Activated CD4-positive, alpha-beta T cell treated with anti-CD3 and anti-CD28 coated beads, Interleukin-2, amount 10 ng/mL, durations not matched to agents 24 days and 14 days (primary cell): ENCODE measurements at regions of chr7 and their contacts with region 1.

Region 1: GRCh38 chr7:100126931-100127865 is at the start of gene MBLAC1:
- DNase-seq: peak; percentile 97
- H3K4me3 Mint-ChIP-seq: peak within 1 kb of the TSS; percentile 99
- H3K27ac Mint-ChIP-seq: peak within 1 kb of the TSS; percentile 100
- H3K4me1 Mint-ChIP-seq: peaks cover 22% of the 10 kb centered on the region
- H3K27me3 Mint-ChIP-seq: no peaks in the 10 kb centered on the region
- total RNA-seq, gene MBLAC1: 3.0 and 3.5 TPM in 2 replicates

Region 2: GRCh38 chr7:99997545-99998137 is 129.6 kb before region 1 on chr7:
- intact Hi-C with region 1: loop called (anchors 1 kb)
- DNase-seq: peak; percentile 92
- H3K4me3 Mint-ChIP-seq: peak overlapping the region; percentile 81
- H3K27ac Mint-ChIP-seq: peak overlapping the region; percentile 89
- H3K4me1 Mint-ChIP-seq: peaks cover 12% of the 10 kb centered on the region
- H3K27me3 Mint-ChIP-seq: peaks cover 2% of the 10 kb centered on the region

Region 3: GRCh38 chr7:100088621-100089457 is 38.4 kb before region 1 on chr7 and contains the start of gene COPS6:
- intact Hi-C with region 1: loop called (anchors 2 kb)
- DNase-seq: peak; percentile 97
- H3K4me3 Mint-ChIP-seq: peak within 1 kb of the TSS; percentile 86
- H3K27ac Mint-ChIP-seq: peak within 1 kb of the TSS; percentile 94
- H3K4me1 Mint-ChIP-seq: peaks cover 29% of the 10 kb centered on the region
- H3K27me3 Mint-ChIP-seq: peaks cover 7% of the 10 kb centered on the region
- total RNA-seq, gene COPS6: 109 and 114 TPM in 2 replicates

Region 4: GRCh38 chr7:100221231-100221718 is 94.1 kb after region 1 on chr7:
- intact Hi-C with region 1: loop called (anchors 5 kb)
- DNase-seq: peak; percentile 92
- H3K4me3 Mint-ChIP-seq: peak overlapping the region; percentile 96
- H3K27ac Mint-ChIP-seq: peak overlapping the region; percentile 99
- H3K4me1 Mint-ChIP-seq: peaks cover 54% of the 10 kb centered on the region
- H3K27me3 Mint-ChIP-seq: no peaks in the 10 kb centered on the region

Region 5: GRCh38 chr7:100407285-100408180 is 280.3 kb after region 1 on chr7:
- intact Hi-C with region 1: loop called (anchors 5 kb)
- DNase-seq: peak; percentile 85
- H3K4me3 Mint-ChIP-seq: no peak overlapping the region
- H3K27ac Mint-ChIP-seq: no peak overlapping the region
- H3K4me1 Mint-ChIP-seq: no peaks in the 10 kb centered on the region
- H3K27me3 Mint-ChIP-seq: peaks cover 25% of the 10 kb centered on the region